AG04450 (cell line): ENCODE measurements at regions of chr7 and their contacts with region 1.

Region 1: GRCh38 chr7:101099969-101100781 is 14.9 kb downstream of the TRIM56 start:
- DNase-seq: peak; percentile 97
- H3K4me3 ChIP-seq: peak overlapping the region; percentile 20; the same call in 1 of the 2 replicates
- H3K27ac ChIP-seq: peak overlapping the region; percentile 99
- H3K27me3 ChIP-seq: no peaks in the 10 kb centered on the region
- CTCF ChIP-seq: no peak

Region 2: DNA sequence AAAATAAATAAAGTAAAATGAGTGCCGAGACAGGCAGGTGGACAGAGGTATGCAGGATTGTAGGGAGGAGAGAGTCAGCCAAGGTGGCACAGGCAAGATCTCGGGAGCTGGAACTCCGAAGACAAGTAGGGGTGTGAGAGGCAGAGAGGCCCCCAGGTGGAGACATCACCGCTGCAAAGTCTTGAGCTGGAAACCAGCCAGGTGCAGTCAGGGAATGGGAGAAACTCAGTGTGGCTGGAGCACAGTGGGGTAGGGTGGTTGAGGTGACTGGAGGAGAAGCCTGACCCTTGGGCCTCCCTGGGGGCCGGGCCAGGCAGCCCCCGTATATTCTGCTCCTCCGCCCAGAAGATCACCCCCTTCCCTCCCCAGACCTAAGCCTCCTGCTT is 277.0 kb before region 1 on chr7:
- CTCF ChIA-PET with region 1: no interaction called
- POLR2A ChIA-PET with region 1: no interaction called
- DNase-seq: no peak
- H3K4me3 ChIP-seq: no peak overlapping the region
- H3K27ac ChIP-seq: no peak overlapping the region
- H3K27me3 ChIP-seq: no peaks in the 10 kb centered on the region
- CTCF ChIP-seq: no peak

Region 3: GRCh38 chr7:101112233-101112632 is 12.1 kb after region 1 on chr7:
- CTCF ChIA-PET with region 1: interaction called, 5 read pairs
- POLR2A ChIA-PET with region 1: interaction called, 24 read pairs
- DNase-seq: no peak
- H3K4me3 ChIP-seq: no peak overlapping the region
- H3K27ac ChIP-seq: peak overlapping the region; percentile 21
- H3K27me3 ChIP-seq: no peaks in the 10 kb centered on the region
- CTCF ChIP-seq: no peak

Region 4: DNA sequence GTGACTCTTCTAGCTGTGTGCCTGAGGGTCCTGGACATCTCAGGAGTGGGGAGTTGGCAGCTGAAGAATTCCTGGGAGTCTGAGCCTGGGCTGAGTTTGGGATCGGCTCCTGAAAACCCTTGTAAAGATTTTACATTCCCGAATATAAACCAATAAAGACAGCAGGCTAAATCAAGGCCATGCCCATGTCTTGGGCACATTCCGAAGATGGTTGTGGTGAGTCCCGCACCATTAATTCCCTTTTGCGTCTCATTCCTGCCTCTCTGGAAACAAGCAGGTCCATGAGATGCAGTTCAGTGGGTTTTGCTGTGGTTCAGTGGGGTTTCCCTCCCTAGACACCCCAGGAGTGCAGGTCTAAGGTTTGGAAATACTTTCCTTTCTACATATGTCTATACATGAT is 353.4 kb after region 1 on chr7:
- CTCF ChIA-PET with region 1: no interaction called
- POLR2A ChIA-PET with region 1: no interaction called
- DNase-seq: no peak
- H3K4me3 ChIP-seq: no peak overlapping the region
- H3K27ac ChIP-seq: no peak overlapping the region
- H3K27me3 ChIP-seq: peaks cover 7% of the 10 kb centered on the region
- CTCF ChIP-seq: no peak